ENCODE measurements at regions of chr14 and their contacts with region 1.

Region 1: DNA sequence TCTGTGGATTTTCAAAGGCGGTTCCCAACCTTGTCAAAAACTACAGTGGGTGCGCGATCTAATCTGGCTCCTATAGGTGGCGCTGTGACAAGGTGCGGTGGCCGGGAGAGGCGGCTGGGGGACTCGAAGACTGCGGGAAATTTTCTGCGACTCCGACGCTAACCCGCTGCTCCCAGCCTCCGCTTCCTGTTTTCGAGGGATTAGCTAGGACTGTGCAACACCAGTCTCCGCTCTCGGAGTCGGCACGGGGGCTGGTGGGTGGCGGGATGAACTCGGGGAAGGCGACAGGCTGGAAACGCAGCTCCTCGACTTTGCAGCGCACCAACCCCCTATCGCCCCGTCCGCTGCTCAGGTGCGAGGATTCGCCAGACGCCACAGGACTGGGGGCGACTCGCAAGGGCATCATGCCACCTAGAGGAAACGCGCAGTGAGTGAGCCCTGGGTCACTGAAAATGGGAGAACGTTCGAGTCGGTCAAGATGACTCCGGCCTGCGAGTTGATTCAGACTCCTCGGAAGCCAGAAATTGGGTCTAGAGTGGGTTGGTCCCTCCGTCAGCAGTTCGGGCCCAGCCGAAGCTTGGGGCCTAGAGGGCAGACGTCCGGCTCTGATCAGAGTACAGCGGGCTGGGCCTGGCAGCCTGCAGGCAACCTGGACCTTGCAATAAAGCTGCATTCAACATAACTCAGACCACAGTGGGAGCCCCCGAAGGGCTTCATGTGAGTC is 5.5 kb upstream of the PAX9 start:
- DNase-seq: no peak
- H3K4me3 ChIP-seq: no peak overlapping the region
- H3K27ac ChIP-seq: no peak overlapping the region
- H3K4me1 ChIP-seq: peaks cover 0 to 6% of the 10 kb centered on the region in 2 donors
- H3K27me3 ChIP-seq: peaks cover 97% of the 10 kb centered on the region
- CTCF ChIP-seq: peak in 2 of 6 experiments; percentile 15 to 31
- POLR2A ChIP-seq: no peak

Region 2: DNA sequence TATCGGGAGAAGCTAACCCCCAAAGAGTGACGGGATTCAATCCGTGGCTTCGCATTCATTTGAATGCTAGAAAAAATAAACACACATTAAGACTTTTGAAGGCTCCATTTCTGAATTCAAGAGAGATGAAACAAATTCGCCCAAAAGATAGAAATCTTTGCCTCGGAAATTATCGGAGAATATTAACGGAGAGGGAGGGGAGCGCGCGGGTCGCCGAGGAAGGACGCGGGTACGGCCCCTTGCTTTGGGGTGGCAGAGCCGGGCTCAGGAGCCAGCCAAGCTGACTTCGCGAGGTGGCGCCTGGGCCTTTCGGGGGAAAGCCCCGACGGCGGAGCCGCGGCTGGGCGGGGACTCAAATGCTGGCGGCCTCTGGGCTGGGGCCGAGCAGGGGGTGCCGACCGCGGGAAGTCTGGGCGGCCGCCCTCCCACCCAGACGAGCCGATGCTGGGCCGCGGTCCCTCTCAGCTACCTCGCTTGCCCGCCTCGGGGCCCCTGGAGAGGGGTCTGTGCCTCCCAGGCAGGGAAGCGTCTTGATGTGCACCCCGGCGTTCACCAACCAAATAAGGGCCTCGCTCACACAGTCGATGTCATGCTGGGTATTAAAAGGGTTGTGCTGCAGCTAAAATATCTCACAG is 150.8 kb before region 1 on chr14:
- intact Hi-C with region 1: no loop called
- DNase-seq: no peak
- H3K4me3 ChIP-seq: no peak overlapping the region
- H3K27ac ChIP-seq: no peak overlapping the region
- H3K4me1 ChIP-seq: no peaks in the 10 kb centered on the region
- H3K27me3 ChIP-seq: peaks cover 86% of the 10 kb centered on the region
- CTCF ChIP-seq: no peak
- POLR2A ChIP-seq: no peak

Region 3: DNA sequence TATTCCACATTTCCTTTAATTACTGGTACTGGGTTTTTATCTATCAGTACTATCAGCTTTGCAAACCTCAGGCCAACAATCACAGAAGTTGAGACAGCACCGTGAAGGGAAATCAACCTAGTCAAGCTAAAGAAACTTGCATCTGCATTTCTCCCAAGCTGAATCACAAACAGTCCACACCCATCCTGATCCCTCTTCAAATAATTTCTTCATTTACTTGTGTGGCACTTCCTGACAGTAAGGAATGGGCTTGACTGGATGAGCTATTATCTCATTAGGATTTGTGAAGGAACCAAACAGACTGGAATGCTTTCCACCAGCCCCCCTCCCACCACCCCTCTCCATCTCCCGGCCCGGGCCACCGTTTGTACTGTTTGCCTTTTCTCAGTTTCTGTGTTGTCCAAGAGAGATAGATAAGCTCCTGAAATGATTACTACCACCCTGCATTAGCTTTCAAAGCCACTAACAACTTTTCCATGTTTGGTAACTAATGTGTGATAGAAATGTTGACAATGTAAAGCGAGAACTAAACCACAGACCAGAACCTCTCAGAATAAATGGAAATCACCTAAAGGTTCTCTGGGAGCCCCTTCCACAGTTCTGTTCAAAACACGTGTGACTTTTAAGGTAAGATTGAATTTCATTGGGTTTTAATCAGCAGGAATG is 280.0 kb after region 1 on chr14:
- intact Hi-C with region 1: loop called in 1 of 2 experiments (anchors 10 kb)
- DNase-seq: no peak
- H3K4me3 ChIP-seq: no peak overlapping the region
- H3K27ac ChIP-seq: no peak overlapping the region
- H3K4me1 ChIP-seq: no peaks in the 10 kb centered on the region
- H3K27me3 ChIP-seq: no peaks in the 10 kb centered on the region
- CTCF ChIP-seq: no peak
- POLR2A ChIP-seq: no peak

Measured in adrenal gland (tissue), 19 donors.